Naive thymus-derived CD8-positive, alpha-beta T cell (primary cell): ENCODE measurements at regions of chr1 and their contacts with region 1.

Region 1: DNA sequence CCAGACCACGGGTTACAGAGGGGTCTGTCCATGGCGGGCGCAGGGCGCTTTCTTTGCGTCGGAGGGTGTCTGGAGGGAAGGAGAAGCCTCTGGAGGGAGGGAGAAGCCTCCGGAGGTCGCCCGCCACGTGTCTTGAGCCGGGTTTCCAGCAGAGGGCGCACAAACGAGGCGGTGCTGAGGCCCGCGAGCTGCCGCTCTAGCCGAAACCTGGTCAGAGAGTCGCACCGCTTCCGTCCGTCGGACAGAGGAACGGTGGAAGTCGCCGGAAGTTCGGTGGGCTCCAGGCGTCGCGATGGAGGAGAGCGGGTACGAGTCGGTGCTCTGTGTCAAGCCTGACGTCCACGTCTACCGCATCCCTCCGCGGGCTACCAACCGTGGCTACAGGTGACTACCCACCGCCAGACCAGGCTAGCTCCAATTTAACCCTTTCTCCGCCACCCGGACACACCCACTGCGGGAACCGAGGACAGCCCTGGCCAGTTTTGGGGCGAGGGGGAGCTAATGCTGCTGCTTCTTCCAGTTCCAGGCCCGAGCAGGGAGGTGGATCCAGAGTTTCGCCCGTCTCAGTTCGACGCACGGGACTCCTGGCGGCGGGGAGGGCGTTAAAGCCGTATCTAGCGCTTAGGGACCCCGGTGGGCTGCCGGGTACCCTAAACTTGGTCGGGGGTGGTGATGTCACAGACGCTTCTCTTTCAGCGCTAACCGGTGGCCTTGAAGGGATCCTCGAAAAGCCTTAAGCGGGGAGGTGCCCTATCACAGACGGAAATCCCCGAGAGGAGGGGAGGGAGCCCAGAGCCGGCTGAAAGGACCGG is at the start of gene NECAP2:
- DNase-seq: peak; percentile 82 to 94 (median 91)
- ATAC-seq: peak; percentile 84 to 90
- H3K4me3 Mint-ChIP-seq: peak within 1 kb of the TSS; percentile 92 to 99 (median 95)
- H3K27ac Mint-ChIP-seq: peak within 1 kb of the TSS; percentile 90 to 98 (median 96)
- H3K4me1 Mint-ChIP-seq: peaks cover 14 to 47% (median 31%) of the 10 kb centered on the region in 4 donors
- H3K27me3 Mint-ChIP-seq: no peaks in the 10 kb centered on the region
- polyA plus RNA-seq, gene NECAP2: 137 to 176 (median 171) TPM

Region 2: DNA sequence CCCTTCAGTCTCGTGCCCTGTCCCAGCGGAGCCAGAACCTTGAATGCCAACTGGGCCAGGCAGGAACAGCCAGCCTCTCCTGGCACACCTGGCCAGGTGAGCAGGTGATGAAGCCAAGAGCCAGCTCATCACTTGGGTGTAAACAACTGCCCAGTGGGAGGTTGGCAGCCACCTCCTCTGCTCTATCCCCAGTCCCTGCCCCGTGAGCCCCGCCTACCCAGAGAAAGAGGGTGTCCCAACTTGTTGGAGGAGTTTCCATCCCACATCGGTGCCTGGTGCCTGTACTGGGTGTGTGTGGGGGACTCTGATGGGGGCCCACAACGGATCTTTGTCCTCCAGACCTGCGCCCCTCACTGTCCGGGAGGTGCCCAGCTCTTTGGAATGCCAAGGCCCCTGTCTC is 349.4 kb before region 1 on chr1:
- POLR2A ChIA-PET with region 1: no interaction called
- DNase-seq: no peak
- ATAC-seq: no peak
- H3K4me3 Mint-ChIP-seq: no peak overlapping the region
- H3K27ac Mint-ChIP-seq: no peak overlapping the region
- H3K4me1 Mint-ChIP-seq: peaks cover 0 to 1% (median 0%) of the 10 kb centered on the region in 4 donors
- H3K27me3 Mint-ChIP-seq: peaks cover 3 to 15% (median 7%) of the 10 kb centered on the region in 5 donors

Region 3: GRCh38 chr1:16300436-16300835 is 140.2 kb before region 1 on chr1:
- POLR2A ChIA-PET with region 1: no interaction called
- DNase-seq: no peak
- ATAC-seq: no peak
- H3K4me3 Mint-ChIP-seq: no peak overlapping the region
- H3K27ac Mint-ChIP-seq: no peak overlapping the region
- H3K4me1 Mint-ChIP-seq: peaks cover 0 to 2% (median under 1%) of the 10 kb centered on the region in 4 donors
- H3K27me3 Mint-ChIP-seq: no peaks in the 10 kb centered on the region

Region 4: DNA sequence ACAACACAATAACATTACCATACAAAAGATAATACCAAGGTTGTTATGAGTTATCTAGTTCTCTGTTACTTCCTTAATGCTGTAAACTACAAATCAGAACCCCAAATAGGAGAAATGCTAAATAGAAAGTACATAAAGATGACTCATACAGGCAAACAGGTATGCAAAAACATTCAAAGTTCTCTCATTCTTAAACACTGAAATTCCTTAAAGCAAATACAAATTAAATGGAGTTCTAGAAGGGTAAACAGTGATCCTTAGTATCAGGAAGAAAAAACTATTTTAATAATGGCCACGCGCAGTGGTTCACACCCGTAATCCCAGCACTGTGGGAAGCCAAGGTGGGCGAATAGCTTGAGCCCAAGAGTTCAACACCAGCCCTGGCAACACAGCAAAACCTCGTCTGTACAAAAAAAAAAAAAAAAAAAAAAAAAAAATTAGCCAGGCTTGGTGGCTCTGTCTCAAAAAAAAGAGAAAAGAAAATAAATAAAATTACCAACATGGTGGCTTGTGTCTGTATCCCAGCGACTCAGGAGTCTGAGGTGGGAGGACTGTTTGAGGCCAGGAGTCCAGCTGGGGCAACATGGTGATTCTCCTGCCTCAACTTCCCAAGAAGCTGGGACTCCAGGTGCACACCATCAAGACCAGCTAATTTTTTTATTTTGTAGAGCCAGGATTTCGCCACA is 105.9 kb before region 1 on chr1:
- POLR2A ChIA-PET with region 1: no interaction called
- DNase-seq: no peak
- ATAC-seq: no peak
- H3K4me3 Mint-ChIP-seq: no peak overlapping the region
- H3K27ac Mint-ChIP-seq: peak overlapping the region in 2 of 10 donors; percentile 4 to 57
- H3K4me1 Mint-ChIP-seq: peaks cover 16 to 43% (median 39%) of the 10 kb centered on the region in 4 donors
- H3K27me3 Mint-ChIP-seq: no peaks in the 10 kb centered on the region

Region 5: DNA sequence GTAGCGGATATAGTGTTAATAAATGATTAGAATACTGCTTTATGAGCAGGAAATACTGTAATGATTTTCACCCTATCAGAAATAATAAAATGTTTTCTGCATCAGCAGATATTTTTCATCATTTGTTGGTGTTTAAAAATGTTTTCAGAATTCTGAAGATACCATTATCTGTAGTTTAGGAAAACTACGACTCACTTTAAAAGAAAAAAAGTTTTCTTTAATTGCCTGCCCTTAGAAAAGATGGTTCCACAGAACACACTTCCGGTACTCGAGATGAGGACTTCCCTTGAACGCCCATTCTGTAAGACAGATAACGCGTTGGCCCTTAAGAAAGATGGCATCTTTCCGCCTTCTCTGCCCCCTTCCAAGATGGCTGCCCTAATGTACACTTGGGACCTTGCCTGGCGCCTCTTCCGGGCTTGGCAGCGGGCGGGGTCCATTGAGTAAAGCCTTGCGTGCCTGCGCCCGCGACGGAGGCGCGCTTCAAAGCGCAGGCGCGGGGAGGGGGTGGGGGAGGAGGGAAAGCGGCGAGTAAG is 73.9 kb before region 1 on chr1 and contains the start of gene SZRD1:
- POLR2A ChIA-PET with region 1: interaction called, 18 read pairs
- DNase-seq: peak in 9 of 10 donors; percentile 91 to 99 (median 96)
- ATAC-seq: peak; percentile 88 to 91
- H3K4me3 Mint-ChIP-seq: peak within 1 kb of the TSS; percentile 94 to 99 (median 96)
- H3K27ac Mint-ChIP-seq: peak within 1 kb of the TSS; percentile 92 to 100 (median 98)
- H3K4me1 Mint-ChIP-seq: peaks cover 9 to 52% (median 32%) of the 10 kb centered on the region in 4 donors
- H3K27me3 Mint-ChIP-seq: no peaks in the 10 kb centered on the region
- polyA plus RNA-seq, gene SZRD1: 47.5 to 50.1 (median 49.7) TPM

Region 6: GRCh38 chr1:16376971-16377370 is 63.7 kb before region 1 on chr1:
- POLR2A ChIA-PET with region 1: no interaction called
- DNase-seq: no peak
- ATAC-seq: no peak
- H3K4me3 Mint-ChIP-seq: peak overlapping the region in 6 of 10 donors; percentile 26 to 45 (median 37)
- H3K27ac Mint-ChIP-seq: peak overlapping the region in 7 of 10 donors; percentile 24 to 69 (median 47)
- H3K4me1 Mint-ChIP-seq: peaks cover 41 to 82% (median 76%) of the 10 kb centered on the region in 4 donors
- H3K27me3 Mint-ChIP-seq: no peaks in the 10 kb centered on the region

Region 7: DNA sequence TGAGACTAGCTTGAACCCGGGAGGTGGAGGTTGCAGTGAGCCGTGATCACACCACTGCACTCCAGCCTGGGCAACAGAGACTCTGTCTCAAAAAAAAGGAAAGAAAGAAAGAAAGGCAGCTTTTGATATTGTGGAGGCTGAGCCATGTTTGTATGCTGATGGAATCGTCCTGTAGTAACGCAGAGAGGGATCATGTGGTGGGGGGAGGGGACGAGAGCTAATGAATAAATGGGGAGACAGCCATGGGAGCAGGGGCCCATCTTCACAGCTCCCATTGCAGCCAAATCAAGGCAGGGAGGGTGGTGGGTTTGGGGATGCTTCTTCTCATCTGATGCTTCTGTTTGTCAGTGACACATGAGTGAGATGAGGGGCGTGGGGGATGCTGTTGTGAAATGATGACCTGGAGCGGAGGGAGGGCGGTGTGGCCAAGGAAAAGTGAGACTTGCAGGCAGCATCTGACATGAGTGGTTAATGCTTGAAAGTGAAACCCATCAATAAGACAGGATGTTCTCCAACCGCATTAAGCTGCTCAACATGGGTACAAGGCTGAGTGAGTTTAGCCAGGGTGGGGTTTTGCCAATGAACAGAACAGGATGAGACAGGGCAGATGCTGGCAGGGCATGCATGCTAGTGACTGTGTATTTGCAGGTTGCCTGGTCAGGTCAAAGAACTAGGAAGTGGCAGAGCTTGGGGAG is 20.1 kb before region 1 on chr1:
- POLR2A ChIA-PET with region 1: interaction called, 17 read pairs
- DNase-seq: peak in 9 of 10 donors; percentile 1 to 68 (median 45)
- ATAC-seq: peak; percentile 97 to 99
- H3K4me3 Mint-ChIP-seq: peak overlapping the region; percentile 26 to 78 (median 70)
- H3K27ac Mint-ChIP-seq: peak overlapping the region; percentile 77 to 95 (median 90)
- H3K4me1 Mint-ChIP-seq: peaks cover 22 to 33% (median 29%) of the 10 kb centered on the region in 4 donors
- H3K27me3 Mint-ChIP-seq: no peaks in the 10 kb centered on the region

Region 8: GRCh38 chr1:16498573-16499413 is 58.1 kb after region 1 on chr1:
- POLR2A ChIA-PET with region 1: interaction called, 15 read pairs
- DNase-seq: peak; percentile 68 to 91 (median 80)
- ATAC-seq: peak; percentile 86 to 90
- H3K4me3 Mint-ChIP-seq: peak overlapping the region; percentile 81 to 92 (median 87)
- H3K27ac Mint-ChIP-seq: peak overlapping the region in 6 of 10 donors; percentile 37 to 93 (median 73)
- H3K4me1 Mint-ChIP-seq: peaks cover 9 to 34% (median 19%) of the 10 kb centered on the region in 4 donors
- H3K27me3 Mint-ChIP-seq: no peaks in the 10 kb centered on the region